Naive thymus-derived CD4-positive, alpha-beta T cell (primary cell): ENCODE measurements at regions of chr11 and their contacts with region 1.

Region 1: DNA sequence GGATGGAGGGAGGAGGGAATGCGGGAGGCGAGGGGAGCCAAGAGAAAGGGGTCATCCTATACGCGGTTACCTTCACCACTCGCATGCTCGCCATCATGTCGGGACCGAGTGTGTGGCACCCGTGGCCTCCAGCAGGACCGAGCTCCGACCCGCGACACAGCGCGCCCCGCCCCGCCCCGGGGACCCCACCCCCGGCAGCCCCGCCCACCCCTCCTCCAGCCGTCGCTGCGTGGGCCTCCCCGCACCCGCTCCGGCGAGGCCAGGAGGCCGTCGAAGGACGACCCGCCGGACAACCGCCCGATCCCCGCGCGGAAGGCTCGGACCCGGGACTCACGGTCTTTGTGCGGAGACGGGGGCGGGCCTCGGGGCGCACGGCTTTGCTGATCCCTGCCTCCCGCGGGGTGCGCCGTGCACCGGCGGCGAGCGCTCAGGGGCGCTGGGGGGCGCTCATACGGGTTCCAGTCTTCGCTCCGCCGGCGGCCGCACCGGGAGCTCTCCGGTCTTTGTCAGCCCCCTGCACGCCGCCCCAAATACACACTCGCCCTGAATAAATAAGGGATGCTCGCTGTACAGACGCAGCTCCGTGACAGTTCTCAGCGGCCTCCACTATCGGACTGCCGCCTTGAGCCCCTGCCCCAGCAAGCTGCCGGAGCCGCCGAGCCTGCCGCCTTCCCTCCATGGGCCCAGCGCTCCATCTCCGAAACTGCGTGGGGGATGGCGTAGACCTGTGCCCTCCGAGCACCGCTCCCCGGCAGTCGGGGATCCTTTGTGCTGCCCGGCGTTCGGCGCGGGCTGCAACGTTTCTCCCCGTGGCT is at the start of gene UBE2L6:
- DNase-seq: peak; percentile 51 to 74 (median 67)
- ATAC-seq: peak; percentile 90
- H3K4me3 ChIP-seq: peak within 1 kb of the TSS; percentile 99
- H3K4me3 Mint-ChIP-seq: peak within 1 kb of the TSS; percentile 92 to 100 (median 99)
- H3K27ac ChIP-seq: peak within 1 kb of the TSS; percentile 97
- H3K27ac Mint-ChIP-seq: peak within 1 kb of the TSS; percentile 95 to 100 (median 98)
- H3K4me1 ChIP-seq: peaks cover 9 to 17% of the 10 kb centered on the region in 2 donors
- H3K4me1 Mint-ChIP-seq: peaks cover 37 to 65% (median 50%) of the 10 kb centered on the region in 7 donors
- H3K27me3 ChIP-seq: no peaks in the 10 kb centered on the region
- H3K27me3 Mint-ChIP-seq: no peaks in the 10 kb centered on the region
- total RNA-seq, gene UBE2L6: 51.1 to 326 (median 64.2) TPM

Region 2: GRCh38 chr11:57456960-57457642 is 110.6 kb before region 1 on chr11:
- CTCF ChIA-PET with region 1: interaction called, 3 read pairs
- POLR2A ChIA-PET with region 1: no interaction called
- intact Hi-C with region 1: loop called in 1 of 2 experiments (anchors 1 kb)
- DNase-seq: peak; percentile 41 to 77 (median 62)
- ATAC-seq: peak; percentile 83
- H3K4me3 ChIP-seq: no peak overlapping the region
- H3K4me3 Mint-ChIP-seq: peak overlapping the region; percentile 54 to 99 (median 74)
- H3K27ac ChIP-seq: no peak overlapping the region
- H3K27ac Mint-ChIP-seq: peak overlapping the region in 1 of 9 donors; percentile 83
- H3K4me1 ChIP-seq: peaks cover 26% of the 10 kb centered on the region in 2 donors
- H3K4me1 Mint-ChIP-seq: peaks cover 17 to 33% (median 26%) of the 10 kb centered on the region in 7 donors
- H3K27me3 ChIP-seq: peaks cover 12% of the 10 kb centered on the region in 2 donors
- H3K27me3 Mint-ChIP-seq: peaks cover 22 to 56% (median 32%) of the 10 kb centered on the region in 5 donors

Region 3: DNA sequence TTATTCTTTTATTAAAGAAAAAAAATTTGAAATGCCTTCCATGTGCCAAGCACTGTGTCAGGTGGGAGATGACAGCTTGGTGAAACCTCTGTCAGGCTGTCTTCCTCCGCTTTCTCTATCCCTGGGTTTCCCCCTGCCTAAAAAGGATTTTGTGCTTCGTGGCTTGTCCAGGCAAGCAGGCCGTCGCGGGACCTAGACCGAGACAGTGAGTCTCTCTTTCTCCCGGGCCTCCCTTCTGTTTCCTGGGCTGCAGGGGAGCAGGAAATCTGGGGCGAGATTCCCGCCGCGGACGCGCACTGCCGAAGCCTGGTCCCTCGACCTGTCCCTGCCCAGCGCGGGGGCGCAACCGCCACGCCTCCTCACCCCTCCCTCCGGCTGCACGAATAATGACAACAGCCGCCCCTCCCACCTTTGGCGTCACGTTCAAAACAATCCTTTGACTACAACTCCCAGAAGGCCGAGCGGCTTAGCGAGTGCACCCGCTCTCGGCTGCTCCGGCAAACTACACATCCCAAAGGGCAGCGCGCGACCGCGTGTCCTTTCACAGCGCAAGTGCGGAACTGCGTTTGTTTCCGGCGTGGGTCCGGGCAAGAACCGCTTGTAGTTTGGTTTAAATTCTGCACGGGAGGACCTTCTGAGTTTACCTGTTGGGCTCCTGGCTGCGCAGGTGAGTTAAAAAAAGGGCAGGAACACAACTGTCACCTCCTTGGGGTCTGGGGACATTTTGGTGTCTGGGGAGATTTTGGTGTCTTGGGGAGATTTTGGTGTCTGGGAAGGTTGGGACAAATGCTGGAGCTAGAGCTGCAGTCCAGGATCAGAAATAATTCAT is 89.7 kb after region 1 on chr11 and contains the start of gene CLP1:
- CTCF ChIA-PET with region 1: interaction called, 4 read pairs
- POLR2A ChIA-PET with region 1: interaction called, 3 read pairs
- intact Hi-C with region 1: loop called (anchors 1 kb)
- DNase-seq: peak; percentile 87 to 99 (median 98)
- ATAC-seq: peak; percentile 99
- H3K4me3 ChIP-seq: peak within 1 kb of the TSS; percentile 64
- H3K4me3 Mint-ChIP-seq: peak within 1 kb of the TSS; percentile 89 to 100 (median 94)
- H3K27ac ChIP-seq: peak within 1 kb of the TSS; percentile 92
- H3K27ac Mint-ChIP-seq: peak within 1 kb of the TSS; percentile 88 to 98 (median 94)
- H3K4me1 ChIP-seq: peaks cover 4 to 10% of the 10 kb centered on the region in 2 donors
- H3K4me1 Mint-ChIP-seq: peaks cover 8 to 45% (median 36%) of the 10 kb centered on the region in 7 donors
- H3K27me3 ChIP-seq: no peaks in the 10 kb centered on the region
- H3K27me3 Mint-ChIP-seq: no peaks in the 10 kb centered on the region
- total RNA-seq, gene CLP1: 12.8 to 18.5 (median 14.7) TPM

Region 4: DNA sequence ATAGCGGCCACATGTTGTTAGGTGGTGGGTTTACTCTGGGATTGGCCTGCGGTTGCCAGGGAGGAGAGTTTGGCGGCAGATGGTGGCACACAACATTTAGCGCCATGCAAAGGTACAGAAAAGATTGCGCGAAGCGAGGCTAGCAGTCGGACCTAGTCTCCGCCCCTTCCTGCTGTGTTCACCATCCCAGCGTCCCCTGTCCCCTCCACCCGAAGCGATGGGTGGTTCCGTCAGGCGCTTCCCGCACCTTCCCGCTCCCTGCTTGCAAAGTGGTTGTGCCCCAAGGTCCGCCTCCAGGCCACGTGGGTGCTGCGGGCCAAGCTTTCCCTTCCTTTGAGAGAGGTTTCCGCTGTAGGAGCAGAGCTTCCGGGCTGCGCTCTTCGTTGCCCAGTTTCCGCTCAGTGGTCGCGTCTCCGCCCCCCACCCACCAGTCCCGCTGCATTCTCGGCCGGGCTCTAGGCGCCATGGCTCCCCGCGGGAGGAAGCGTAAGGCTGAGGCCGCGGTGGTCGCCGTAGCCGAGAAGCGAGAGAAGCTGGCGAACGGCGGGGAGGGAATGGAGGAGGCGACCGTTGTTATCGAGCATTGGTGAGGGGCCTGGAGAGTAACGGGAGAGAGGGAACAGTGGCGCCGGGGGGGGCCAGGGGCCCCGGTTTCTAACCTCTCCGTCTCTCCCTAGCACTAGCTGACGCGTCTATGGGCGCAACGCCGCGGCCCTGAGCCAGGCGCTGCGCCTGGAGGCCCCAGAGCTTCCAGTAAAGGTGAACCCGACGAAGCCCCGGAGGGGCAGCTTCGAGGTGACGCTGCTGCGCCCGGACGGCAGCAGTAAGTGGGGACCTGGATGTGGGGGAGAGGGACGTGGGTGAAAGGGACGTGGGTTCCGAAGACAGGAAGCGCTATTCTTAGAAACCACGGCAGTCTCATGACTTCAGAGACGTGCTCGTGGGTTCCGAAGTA is 173.7 kb after region 1 on chr11 and contains the start of gene SELENOH:
- CTCF ChIA-PET with region 1: no interaction called
- POLR2A ChIA-PET with region 1: interaction called, 4 read pairs
- intact Hi-C with region 1: loop called (anchors 1 kb)
- DNase-seq: peak; percentile 75 to 96 (median 91)
- ATAC-seq: peak; percentile 94
- H3K4me3 ChIP-seq: peak within 1 kb of the TSS; percentile 86
- H3K4me3 Mint-ChIP-seq: peak within 1 kb of the TSS; percentile 90 to 100 (median 99)
- H3K27ac ChIP-seq: peak within 1 kb of the TSS; percentile 93
- H3K27ac Mint-ChIP-seq: peak within 1 kb of the TSS; percentile 97 to 100 (median 98)
- H3K4me1 ChIP-seq: peaks cover 16 to 23% of the 10 kb centered on the region in 2 donors
- H3K4me1 Mint-ChIP-seq: peaks cover 12 to 50% (median 41%) of the 10 kb centered on the region in 7 donors
- H3K27me3 ChIP-seq: no peaks in the 10 kb centered on the region
- H3K27me3 Mint-ChIP-seq: no peaks in the 10 kb centered on the region
- total RNA-seq, gene SELENOH: 93.6 to 193 (median 124) TPM

Region 5: DNA sequence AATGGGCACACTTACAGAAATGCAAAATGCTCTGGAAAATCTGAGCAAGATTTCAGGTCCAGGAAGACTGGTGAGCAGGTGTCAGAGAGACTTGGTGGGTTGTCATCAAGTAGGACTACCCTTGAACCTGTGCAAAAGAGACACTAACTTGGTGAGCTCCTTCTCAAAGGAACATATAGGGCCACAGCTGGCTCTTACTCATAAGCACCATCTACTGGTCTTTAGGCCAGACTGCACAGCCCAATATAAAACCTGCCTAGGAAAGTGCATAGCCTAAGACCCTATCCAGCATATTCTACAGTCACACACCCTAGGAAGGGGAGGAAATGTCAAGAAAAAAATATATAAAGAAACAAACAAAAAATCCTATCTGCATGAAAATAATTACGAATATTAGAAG is 718.5 kb after region 1 on chr11:
- CTCF ChIA-PET with region 1: no interaction called
- POLR2A ChIA-PET with region 1: no interaction called
- intact Hi-C with region 1: loop called in 1 of 2 experiments (anchors 1 kb)
- DNase-seq: peak in 1 of 9 donors; percentile 1
- ATAC-seq: peak; percentile 37
- H3K4me3 ChIP-seq: no peak overlapping the region
- H3K4me3 Mint-ChIP-seq: no peak overlapping the region
- H3K27ac ChIP-seq: no peak overlapping the region
- H3K27ac Mint-ChIP-seq: no peak overlapping the region
- H3K4me1 ChIP-seq: no peaks in the 10 kb centered on the region
- H3K4me1 Mint-ChIP-seq: peaks cover 0 to 12% (median 3%) of the 10 kb centered on the region in 7 donors
- H3K27me3 ChIP-seq: no peaks in the 10 kb centered on the region
- H3K27me3 Mint-ChIP-seq: peaks cover 0 to 32% (median 16%) of the 10 kb centered on the region in 5 donors